Left cardiac atrium (tissue), 4 donors: ENCODE measurements at regions of chr12 and their contacts with region 1.

Region 1: GRCh38 chr12:121499929-121500793 is 80.7 kb downstream of the KDM2B start:
- DNase-seq: peak; percentile 81
- ATAC-seq: peak; percentile 88 to 90

Region 2: GRCh38 chr12:121536899-121537813 is 37.0 kb after region 1 on chr12:
- intact Hi-C with region 1: loop called in 1 of 2 experiments (anchors 5 kb)
- DNase-seq: peak; percentile 90
- ATAC-seq: peak; percentile 86 to 88

Region 3: GRCh38 chr12:121933522-121934308 is 433.6 kb after region 1 on chr12:
- intact Hi-C with region 1: no loop called
- DNase-seq: no peak
- ATAC-seq: peak in 1 of 2 donors; percentile 78